ENCODE measurements at regions of chr16 and their contacts with region 1.

Region 1: GRCh38 chr16:20383106-20384029 is 21.2 kb downstream of the PDILT start:
- DNase-seq: peak; percentile 70 to 74
- ATAC-seq: peak; percentile 88 to 98
- H3K4me3 ChIP-seq: no peak overlapping the region
- H3K27ac ChIP-seq: no peak overlapping the region
- H3K4me1 ChIP-seq: no peaks in the 10 kb centered on the region
- CTCF ChIP-seq: peak; percentile 66
- EP300 ChIP-seq: no peak
- POLR2A ChIP-seq: no peak
- RAD21 ChIP-seq: peak; percentile 77 to 84

Region 2: DNA sequence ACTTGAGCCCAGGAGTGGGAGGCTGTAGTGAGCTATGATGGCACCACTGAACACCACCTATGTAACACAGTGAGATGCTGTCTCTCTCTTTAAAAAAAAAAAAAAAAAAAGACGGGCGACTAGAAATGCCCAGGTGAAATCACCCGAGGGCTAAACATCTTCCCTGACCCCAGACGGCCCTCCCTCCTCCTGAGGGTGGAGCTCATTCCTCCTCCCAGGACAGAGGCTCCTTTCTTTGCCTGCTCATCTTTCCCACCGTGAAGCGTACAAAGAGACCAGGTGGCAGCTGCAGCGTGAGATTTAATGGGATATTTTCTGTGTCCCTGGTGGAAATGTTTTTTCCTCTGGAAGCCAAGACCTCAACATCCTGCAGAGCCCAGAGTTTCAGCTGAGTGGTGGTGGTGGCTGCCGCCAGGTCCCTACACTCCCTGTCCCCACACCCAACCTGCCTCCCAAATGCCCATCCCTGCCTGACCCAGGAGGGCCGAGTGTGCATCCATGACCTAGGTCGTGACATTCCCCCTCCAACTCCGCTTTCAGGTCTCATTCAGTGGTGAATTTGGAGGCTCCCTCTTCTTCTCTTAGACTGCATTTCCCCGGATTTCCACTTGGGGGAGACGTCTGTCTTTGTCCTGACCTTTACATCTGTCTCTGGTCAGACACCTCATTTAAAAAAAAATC is 484.3 kb before region 1 on chr16:
- CTCF ChIA-PET with region 1: interaction called, 374 read pairs
- POLR2A ChIA-PET with region 1: no interaction called
- DNase-seq: peak; percentile 66 to 68
- ATAC-seq: peak; percentile 87 to 90; a peak in 5 of 6 replicates
- H3K4me3 ChIP-seq: no peak overlapping the region
- H3K27ac ChIP-seq: no peak overlapping the region
- H3K4me1 ChIP-seq: 0 out of 3 replicates have a peak, but pooled peaks cover 4% of the 10 kb centered on the region
- CTCF ChIP-seq: peak; percentile 69
- EP300 ChIP-seq: no peak
- POLR2A ChIP-seq: no peak
- RAD21 ChIP-seq: peak; percentile 78 to 84

Region 3: DNA sequence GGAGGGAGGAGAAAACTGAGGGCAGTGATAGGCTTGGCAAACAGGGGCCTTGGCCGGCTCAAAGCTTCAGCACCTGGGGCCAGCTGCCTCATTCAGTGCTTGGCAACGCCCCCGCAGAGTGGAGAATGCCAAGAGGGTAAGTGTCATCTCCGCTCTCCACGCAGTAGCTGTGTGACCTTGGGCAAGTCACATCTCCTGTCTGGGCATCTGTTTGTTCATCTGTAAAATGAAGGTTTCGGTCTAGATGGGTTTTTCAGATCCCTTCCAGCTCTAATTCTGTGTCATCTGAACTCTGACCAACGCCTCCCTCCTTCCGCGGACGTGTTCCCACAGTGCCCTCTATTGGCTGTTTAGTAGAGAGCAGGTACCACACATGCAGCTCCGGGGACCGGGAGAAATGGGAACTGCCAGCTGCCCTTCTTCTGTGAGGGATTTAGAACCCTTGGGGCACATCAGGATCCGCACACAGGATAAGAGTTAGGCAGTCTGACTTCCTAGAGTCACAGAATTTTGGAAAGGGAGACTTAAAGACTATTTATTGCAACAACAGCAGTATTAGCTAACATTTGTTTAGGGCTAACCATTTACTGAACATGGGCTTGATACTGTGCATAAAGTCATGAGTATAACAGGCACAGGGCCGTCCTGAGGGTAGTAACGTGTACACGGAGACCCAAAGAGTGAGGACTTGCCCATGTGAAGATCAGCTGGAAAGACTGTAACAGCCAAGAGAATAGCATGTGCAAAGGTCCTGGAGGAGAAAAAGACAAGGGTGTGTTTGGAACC is 82.9 kb before region 1 on chr16:
- CTCF ChIA-PET with region 1: interaction called, 30 read pairs
- POLR2A ChIA-PET with region 1: no interaction called
- DNase-seq: peak; percentile 62 to 63
- ATAC-seq: peak; percentile 91 to 96
- H3K4me3 ChIP-seq: no peak overlapping the region
- H3K27ac ChIP-seq: no peak overlapping the region
- H3K4me1 ChIP-seq: no peaks in the 10 kb centered on the region
- CTCF ChIP-seq: peak; percentile 73
- EP300 ChIP-seq: no peak
- POLR2A ChIP-seq: no peak
- RAD21 ChIP-seq: peak; percentile 85 to 92

Region 4: GRCh38 chr16:20372701-20373100 is 10.7 kb before region 1 on chr16:
- CTCF ChIA-PET with region 1: interaction called, 76 read pairs
- POLR2A ChIA-PET with region 1: no interaction called
- DNase-seq: no peak
- ATAC-seq: no peak
- H3K4me3 ChIP-seq: no peak overlapping the region
- H3K27ac ChIP-seq: no peak overlapping the region
- H3K4me1 ChIP-seq: no peaks in the 10 kb centered on the region
- CTCF ChIP-seq: no peak
- EP300 ChIP-seq: no peak
- POLR2A ChIP-seq: no peak
- RAD21 ChIP-seq: no peak

Region 5: GRCh38 chr16:20401475-20402016 is 18.2 kb after region 1 on chr16:
- CTCF ChIA-PET with region 1: interaction called, 17 read pairs
- POLR2A ChIA-PET with region 1: no interaction called
- DNase-seq: no peak
- ATAC-seq: 0 out of 6 replicates have a peak, but pooled peaks of 1 of the 2 experiments have one; percentile 30
- H3K4me3 ChIP-seq: no peak overlapping the region
- H3K27ac ChIP-seq: no peak overlapping the region
- H3K4me1 ChIP-seq: no peaks in the 10 kb centered on the region
- CTCF ChIP-seq: no peak
- EP300 ChIP-seq: no peak
- POLR2A ChIP-seq: no peak
- RAD21 ChIP-seq: no peak